Posterior vena cava (tissue), 2 donors: ENCODE measurements at regions of chr5 and their contacts with region 1.

Region 1: GRCh38 chr5:102971697-102972293 is 148.1 kb downstream of the GIN1 start:
- DNase-seq: no peak

Region 2: DNA sequence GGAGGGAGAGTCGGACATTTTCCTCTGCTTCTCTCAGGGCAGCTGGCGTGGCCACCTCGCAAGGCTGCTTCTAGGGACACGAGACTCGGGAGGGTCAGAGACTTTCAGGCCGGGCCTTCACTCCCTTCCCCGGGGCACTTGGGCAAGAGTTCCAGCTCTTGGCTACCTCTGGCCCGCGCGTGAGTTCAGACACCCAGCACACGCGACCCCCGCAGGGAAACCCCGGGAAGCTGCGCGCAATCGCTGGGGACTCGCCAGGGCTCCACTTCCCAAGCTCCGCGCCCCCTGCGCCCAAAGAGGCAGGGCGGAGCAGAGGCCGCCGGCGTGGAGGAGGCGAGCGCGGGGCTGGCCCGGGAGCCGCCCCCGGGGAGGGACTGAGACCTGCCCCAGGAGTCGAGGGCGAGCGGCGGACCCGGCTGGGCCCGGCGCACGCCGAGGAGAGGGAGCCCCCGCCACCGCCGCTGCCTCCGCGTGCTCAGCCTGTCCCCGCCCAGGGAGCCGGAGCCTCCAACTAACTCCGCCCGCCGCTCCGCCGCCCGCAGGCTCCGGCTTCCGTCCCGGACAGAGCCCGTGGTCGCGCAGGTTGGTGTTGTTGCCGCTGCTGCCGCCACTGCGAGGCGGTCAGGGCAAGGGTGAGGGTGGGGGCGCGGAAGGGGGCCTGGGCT is 216.9 kb before region 1 on chr5 and contains the start of gene PAM:
- intact Hi-C with region 1: loop called in 1 of 2 experiments (anchors 10 kb)
- DNase-seq: peak; percentile 94
- total RNA-seq, gene PAM: 340 to 357 TPM